Dendritic cell treated with granulocyte-macrophage colony-stimulating factor and Interleukin-4, amounts not matched to agents 40 ng/mL and 50 ng/mL, for 4 days (primary cell): ENCODE measurements at regions of chr19 and their contacts with region 1.

Region 1: DNA sequence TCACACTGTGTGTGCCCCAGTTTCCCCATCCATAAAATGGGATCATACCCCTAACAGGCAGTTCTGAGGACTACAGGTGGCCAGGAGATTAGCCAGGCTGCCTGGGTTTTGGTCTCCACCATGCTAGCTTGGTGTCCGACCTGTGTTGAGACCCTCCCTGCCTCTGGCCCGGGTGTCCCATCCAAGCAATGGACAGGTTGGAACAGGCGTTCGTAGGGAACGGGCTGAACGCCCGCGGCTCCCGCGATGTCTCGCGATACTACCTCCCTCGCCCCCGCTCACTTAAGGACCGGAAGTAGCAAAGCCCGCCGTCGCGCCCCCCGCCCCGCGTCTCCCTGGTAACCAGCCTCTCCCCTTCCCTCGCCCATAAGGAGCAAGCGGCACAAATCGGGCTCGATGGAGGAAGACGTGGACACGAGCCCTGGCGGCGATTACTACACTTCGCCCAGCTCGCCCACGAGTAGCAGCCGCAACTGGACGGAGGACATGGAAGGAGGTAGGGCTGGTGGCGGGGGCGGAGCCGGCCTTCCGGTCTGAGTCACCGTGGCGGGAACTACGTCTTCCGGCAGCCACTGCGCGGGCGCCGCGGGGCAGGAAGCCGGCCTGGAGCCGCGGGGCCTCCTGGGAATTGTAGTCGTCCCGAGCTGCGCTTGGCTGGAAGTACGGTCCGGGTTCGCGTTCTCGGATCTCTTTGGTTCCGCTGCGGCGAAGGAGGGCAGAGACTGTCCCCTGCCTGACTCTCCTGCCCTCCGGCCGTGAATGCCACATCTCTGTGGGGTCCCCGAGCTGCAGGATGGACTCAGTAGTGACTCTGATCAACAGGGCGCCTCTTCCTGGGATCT is 45.4 kb downstream of the SMIM24 start:
- H3K4me3 Mint-ChIP-seq: peak overlapping the region; percentile 79
- H3K27ac Mint-ChIP-seq: peak overlapping the region; percentile 92
- H3K4me1 Mint-ChIP-seq: peaks cover 37% of the 10 kb centered on the region
- H3K27me3 Mint-ChIP-seq: no peaks in the 10 kb centered on the region

Region 2: DNA sequence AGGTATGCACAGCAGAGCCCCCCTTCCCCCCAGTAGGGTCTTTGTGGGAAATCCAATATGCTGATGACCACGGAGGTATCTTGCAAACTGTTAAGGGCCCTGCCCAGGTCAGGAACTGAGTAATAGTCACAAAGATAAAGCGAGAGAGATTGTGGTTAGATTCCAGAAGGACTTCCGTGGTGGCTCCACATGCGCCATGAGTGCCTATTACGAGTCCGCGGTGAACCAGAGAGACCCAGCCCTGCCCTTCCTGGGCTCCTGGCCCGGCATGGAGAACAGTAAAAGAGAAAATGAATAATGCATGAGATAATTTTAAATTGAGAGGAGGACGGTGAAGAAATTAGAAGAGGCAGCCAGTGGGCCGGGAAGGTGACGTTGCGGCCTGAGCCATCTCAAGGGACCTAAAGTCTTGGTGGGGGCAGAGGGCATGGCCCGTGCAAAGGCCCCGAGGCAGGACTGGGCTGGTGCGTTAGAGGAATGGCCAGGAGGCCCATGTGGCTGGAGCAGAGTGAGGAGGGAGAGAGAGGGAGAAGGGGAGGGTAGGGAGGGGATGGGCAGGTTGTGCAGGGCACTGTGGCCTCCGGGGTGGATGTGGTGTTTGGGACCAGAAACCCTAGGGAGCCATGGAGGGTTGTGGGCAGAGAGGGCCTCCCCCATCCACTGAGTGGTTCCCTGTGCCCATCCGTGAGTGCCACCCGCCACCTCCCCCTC is 115.1 kb before region 1 on chr19:
- intact Hi-C with region 1: no loop called
- H3K4me3 Mint-ChIP-seq: no peak overlapping the region
- H3K27ac Mint-ChIP-seq: no peak overlapping the region
- H3K4me1 Mint-ChIP-seq: no peaks in the 10 kb centered on the region
- H3K27me3 Mint-ChIP-seq: peaks cover 26% of the 10 kb centered on the region

Region 3: DNA sequence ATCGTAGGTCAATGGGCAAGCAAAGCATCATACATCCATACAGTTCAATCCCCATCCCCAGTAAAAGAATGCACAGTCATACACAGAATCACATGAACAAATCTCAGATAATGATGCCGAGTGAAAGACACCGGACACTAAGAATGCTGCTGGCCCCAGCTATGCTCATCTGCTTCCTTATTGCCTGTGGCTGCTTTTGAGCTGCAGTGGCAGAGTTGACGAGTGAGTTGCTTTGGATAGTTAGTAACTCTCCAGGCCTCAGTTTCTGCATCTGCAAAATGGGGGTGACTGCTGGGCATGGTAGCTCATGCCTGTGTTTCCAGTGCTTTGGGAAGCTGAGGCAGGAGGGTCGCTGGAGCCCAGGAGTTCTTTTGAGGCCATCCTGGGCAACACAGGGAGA is 81.4 kb before region 1 on chr19:
- intact Hi-C with region 1: no loop called
- H3K4me3 Mint-ChIP-seq: no peak overlapping the region
- H3K27ac Mint-ChIP-seq: no peak overlapping the region
- H3K4me1 Mint-ChIP-seq: peaks cover 12% of the 10 kb centered on the region
- H3K27me3 Mint-ChIP-seq: peaks cover 12% of the 10 kb centered on the region

Region 4: DNA sequence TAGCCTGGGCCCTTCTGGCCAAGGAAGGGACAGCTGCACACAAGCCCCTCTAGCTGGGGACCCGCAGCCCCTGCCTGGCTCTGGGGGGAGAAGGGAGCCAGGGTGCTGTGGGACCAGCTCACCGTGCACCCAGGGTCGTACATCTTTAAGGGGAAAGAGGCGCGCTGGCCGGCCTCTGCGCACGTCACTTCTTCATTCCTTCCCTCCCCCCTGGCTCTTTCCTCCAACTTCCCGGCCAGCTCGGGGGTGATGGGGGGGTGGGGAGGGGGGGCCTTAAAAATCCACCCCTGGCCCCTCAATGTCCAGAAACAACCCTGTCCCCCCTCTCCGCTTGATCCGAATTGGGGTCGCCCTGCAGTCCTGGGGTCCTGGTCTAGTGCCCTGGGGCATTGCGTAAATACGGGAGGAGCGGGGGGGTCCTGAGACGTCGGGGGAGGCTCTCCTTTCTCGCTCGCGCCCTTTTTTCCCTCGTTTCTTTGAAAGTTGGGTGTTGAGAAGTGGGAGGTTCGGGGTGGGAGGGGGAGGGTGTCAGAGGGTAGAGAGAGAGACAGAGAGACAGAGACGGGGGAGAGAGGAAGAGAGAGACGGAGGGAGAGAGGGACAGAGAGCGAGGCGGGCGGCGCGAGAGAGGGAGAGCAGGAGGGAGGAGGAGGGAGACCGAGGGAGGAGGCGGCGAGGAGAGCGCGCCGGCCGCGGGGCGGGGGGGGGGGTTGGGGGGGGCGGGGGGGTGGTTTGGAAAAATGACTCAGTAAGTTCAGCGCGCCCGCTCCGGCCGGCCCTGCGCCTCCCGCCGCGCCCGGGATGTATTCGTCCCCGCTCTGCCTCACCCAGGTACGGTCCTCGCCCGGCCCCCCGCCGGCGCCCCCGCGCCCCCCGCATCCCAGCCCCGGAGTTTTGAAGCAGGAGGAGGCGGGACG is 68.8 kb before region 1 on chr19 and contains the start of gene NFIC:
- intact Hi-C with region 1: loop called (anchors 5 kb)
- H3K4me3 Mint-ChIP-seq: peak within 1 kb of the TSS; percentile 73
- H3K27ac Mint-ChIP-seq: peak within 1 kb of the TSS; percentile 78
- H3K4me1 Mint-ChIP-seq: peaks cover 79% of the 10 kb centered on the region
- H3K27me3 Mint-ChIP-seq: no peaks in the 10 kb centered on the region

Region 5: GRCh38 chr19:3450796-3451411 is 16.0 kb after region 1 on chr19:
- intact Hi-C with region 1: no loop called
- H3K4me3 Mint-ChIP-seq: no peak overlapping the region
- H3K27ac Mint-ChIP-seq: peak overlapping the region; percentile 5
- H3K4me1 Mint-ChIP-seq: no peaks in the 10 kb centered on the region
- H3K27me3 Mint-ChIP-seq: no peaks in the 10 kb centered on the region